Left colon (tissue), 2 donors: ENCODE measurements at regions of chr3 and their contacts with region 1.

Region 1: GRCh38 chr3:128426128-128426921 is 40.4 kb downstream of the DNAJB8 start:
- DNase-seq: peak in 1 of 2 donors; percentile 41
- ATAC-seq: peak; percentile 94

Region 2: DNA sequence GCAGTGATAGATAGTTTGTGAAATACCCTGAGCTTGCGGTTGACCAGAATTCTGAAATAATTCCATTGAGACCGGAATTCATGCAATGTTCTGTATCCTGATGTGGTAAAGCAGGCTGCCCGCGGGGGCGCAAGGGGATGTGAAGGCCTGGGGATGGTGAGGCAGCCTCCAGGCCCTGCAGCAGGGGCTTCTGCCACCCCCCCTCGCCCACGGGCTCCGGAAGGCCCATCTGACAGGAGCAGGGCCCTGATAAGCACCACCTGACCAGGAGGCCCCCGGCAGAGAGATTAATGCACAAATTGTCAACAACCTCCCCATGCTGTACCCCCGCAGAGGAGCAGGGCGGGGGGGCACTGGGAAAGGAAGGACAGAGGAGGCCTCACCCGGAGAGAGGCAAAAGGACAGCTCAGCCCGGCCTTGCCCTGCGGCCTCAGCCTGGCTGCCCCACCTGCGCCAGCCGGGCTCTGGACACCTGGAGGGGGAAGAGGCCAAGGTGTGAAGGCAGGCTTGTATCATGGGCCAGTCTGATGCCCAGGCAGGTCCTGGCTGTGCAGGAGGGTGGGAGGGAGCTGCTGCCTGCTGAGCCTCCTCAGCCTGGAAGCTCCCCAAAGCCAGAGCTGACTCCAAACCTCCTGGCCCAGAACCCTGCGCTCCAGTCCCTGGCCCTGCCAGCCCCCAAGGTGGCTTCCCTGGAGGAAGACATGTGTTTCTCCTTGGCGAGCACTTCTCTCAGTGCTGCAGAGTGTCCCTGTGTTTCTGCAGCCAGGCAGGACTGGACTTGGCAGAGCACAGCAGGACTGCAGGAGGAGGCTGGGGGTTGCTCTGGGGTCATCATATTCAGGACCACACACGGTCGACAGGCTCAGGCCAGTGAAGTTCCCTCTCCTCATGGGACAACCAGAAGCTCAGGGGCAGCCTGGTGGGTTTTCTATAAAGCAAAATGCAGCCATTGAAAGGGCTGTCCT is 177.8 kb after region 1 on chr3:
- intact Hi-C with region 1: loop called (anchors 5 to 10 kb)
- DNase-seq: no peak
- ATAC-seq: no peak